ENCODE measurements at regions of chr5 and their contacts with region 1.

Region 1: DNA sequence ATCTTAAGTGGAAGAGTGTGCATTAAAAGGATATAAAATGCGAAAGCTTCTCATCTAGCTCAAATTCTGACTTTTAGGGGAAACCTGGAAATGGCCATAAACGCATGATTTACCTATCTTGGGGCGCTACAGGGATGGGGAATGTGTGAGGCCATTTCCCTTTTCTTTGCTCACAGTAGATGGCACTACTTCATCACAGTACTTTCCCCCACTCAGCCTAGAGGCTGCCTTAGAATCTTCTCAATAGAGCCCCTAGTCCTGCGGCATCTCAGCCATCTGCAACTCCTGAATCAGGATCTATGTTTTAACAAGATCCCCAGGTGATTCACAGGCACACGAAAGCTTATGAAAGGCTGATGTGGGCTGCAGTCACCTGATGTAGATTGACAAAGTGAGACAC is 110.8 kb downstream of the LHFPL2 start:
- DNase-seq: no peak

Region 2: GRCh38 chr5:78964887-78965286 is 427.1 kb after region 1 on chr5:
- intact Hi-C with region 1: loop called (anchors 5 kb)
- DNase-seq: no peak

Measured in cardiac septum (tissue), 1 donor.